Dendritic cell treated with granulocyte-macrophage colony-stimulating factor and Interleukin-4, amounts not matched to agents 40 ng/mL and 50 ng/mL, for 4 days (primary cell): ENCODE measurements at regions of chr7 and their contacts with region 1.

Region 1: GRCh38 chr7:23181684-23182553 is at the start of gene NUP42:
- H3K4me3 Mint-ChIP-seq: peak within 1 kb of the TSS; percentile 80
- H3K27ac Mint-ChIP-seq: peak within 1 kb of the TSS; percentile 91
- H3K4me1 Mint-ChIP-seq: peaks cover 21% of the 10 kb centered on the region
- H3K27me3 Mint-ChIP-seq: peaks cover 7% of the 10 kb centered on the region

Region 2: GRCh38 chr7:23105644-23106056 is 76.3 kb before region 1 on chr7 and contains the start of gene KLHL7:
- intact Hi-C with region 1: loop called (anchors 2 kb)
- H3K4me3 Mint-ChIP-seq: peak within 1 kb of the TSS; percentile 99
- H3K27ac Mint-ChIP-seq: peak within 1 kb of the TSS; percentile 97
- H3K4me1 Mint-ChIP-seq: peaks cover 34% of the 10 kb centered on the region
- H3K27me3 Mint-ChIP-seq: no peaks in the 10 kb centered on the region

Region 3: GRCh38 chr7:23238983-23239652 is 57.2 kb after region 1 on chr7:
- intact Hi-C with region 1: no loop called
- H3K4me3 Mint-ChIP-seq: no peak overlapping the region
- H3K27ac Mint-ChIP-seq: no peak overlapping the region
- H3K4me1 Mint-ChIP-seq: peaks cover 12% of the 10 kb centered on the region
- H3K27me3 Mint-ChIP-seq: peaks cover 4% of the 10 kb centered on the region

Region 4: DNA sequence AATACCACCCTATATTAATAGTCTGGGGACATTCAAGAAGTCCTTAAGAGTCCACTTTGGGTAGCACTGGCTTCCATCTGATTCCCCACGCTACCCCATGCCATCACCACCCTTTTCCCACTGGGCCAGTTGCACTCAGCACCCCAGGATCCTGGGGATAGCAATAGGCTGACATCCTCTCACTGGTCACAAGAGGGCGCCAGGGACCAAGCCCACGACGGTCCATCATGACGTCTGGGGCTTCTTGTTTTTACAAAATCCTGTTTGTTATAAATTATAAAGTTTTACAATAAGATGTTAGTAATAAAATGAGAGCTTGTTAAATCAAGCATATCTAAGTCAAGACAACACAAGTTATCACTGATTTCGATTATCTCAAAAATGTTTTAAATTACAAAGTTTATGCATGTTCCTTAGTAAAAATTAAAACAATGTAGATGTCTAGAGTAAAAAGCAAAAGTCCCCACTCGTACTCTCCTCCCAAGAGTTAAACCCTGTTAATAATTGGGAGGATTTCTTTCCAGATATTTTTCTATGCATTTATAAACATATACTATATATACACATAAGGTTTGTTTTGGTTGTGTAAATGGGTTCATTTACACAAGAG is 80.0 kb after region 1 on chr7:
- intact Hi-C with region 1: loop called (anchors 2 kb)
- H3K4me3 Mint-ChIP-seq: no peak overlapping the region
- H3K27ac Mint-ChIP-seq: no peak overlapping the region
- H3K4me1 Mint-ChIP-seq: no peaks in the 10 kb centered on the region
- H3K27me3 Mint-ChIP-seq: peaks cover 11% of the 10 kb centered on the region

Region 5: GRCh38 chr7:23273141-23273599 is 91.3 kb after region 1 on chr7:
- intact Hi-C with region 1: no loop called
- H3K4me3 Mint-ChIP-seq: no peak overlapping the region
- H3K27ac Mint-ChIP-seq: no peak overlapping the region
- H3K4me1 Mint-ChIP-seq: peaks cover 6% of the 10 kb centered on the region
- H3K27me3 Mint-ChIP-seq: peaks cover 3% of the 10 kb centered on the region

Region 6: DNA sequence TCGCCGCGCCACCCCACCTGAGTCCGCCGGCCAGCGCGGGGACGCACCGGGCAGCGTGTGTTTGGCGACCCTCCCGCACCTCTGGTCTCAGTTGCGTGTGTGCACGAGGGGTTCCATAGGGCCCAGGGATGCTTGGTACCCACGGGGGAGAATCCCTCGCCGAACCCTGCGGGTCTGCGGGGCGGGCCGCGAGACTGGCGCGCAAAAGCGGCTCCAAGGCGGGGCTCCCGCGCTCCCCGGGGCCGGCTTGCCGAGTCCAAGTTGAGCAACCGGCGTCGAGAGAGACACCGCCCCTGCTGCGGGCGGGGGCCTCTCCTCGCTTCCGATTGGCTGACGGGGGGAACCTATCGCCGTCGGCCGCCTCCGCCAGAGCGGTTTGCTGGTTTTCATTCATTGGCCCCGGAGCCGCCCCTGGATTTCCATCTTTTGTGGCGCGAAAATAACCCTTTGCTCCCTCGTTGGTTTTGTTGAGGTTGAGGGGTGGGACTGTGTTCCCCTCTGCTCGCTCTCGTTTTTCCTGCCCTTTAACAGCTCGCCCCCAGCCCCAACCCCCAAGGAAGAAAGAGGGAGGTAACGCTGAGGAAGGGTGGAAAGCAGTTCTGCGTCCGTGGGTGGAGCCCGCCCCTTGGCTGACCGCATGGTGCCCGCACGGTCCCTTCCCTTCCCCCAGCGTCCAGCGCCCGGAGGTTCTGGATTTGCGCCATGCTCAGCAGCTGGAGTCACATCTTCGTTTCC is 292.3 kb after region 1 on chr7:
- intact Hi-C with region 1: loop called (anchors 10 kb)
- H3K4me3 Mint-ChIP-seq: peak overlapping the region; percentile 79
- H3K27ac Mint-ChIP-seq: peak overlapping the region; percentile 15
- H3K4me1 Mint-ChIP-seq: peaks cover 31% of the 10 kb centered on the region
- H3K27me3 Mint-ChIP-seq: peaks cover 73% of the 10 kb centered on the region

Region 7: DNA sequence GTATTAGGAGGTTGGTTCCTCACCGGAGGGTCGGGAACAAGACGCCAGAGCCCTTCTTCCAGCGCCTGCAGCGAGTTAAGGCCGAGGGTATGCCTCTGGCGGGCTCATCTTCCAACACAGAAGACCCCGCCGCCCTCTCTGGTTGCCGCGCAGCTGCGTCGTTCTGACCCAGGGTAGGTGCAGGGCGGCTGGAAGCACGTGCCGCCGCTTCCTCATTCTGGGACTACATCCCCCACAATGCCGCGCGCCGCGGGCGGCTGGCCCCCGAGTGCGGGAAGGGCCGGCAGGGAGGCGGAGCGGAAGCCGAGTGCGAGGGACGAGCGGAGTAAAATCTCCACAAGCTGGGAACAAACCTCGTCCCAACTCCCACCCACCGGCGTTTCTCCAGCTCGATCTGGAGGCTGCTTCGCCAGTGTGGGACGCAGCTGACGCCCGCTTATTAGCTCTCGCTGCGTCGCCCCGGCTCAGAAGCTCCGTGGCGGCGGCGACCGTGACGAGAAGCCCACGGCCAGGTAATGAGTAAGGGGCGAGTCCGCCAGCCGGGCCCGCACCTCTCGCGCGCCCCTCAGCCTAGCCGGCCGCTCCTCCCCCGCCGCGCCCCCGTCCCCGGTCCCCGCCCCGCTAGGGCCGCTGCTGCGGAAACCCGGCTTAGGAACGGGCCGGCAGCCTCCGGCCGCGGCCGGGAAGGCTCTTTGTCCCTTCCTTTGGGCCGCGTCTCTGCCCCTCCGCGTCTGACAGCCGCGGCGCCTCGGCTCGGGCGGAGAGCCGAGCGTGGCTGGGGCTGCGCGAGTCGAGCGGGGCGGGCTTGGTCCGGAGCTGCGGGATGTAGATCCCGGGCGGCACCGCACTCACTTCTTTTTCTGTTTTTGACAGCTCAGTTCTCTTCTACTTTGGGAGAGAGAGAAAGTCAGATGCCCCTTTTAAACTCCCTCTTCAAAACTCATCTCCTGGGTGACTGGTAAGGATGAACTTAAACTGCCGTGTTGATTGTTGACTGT is 415.5 kb after region 1 on chr7 and contains the start of gene CCDC126:
- intact Hi-C with region 1: loop called (anchors 5 kb)
- H3K4me3 Mint-ChIP-seq: peak within 1 kb of the TSS; percentile 81
- H3K27ac Mint-ChIP-seq: peak within 1 kb of the TSS; percentile 79
- H3K4me1 Mint-ChIP-seq: peaks cover 26% of the 10 kb centered on the region
- H3K27me3 Mint-ChIP-seq: peaks cover 17% of the 10 kb centered on the region